Activated CD4-positive, alpha-beta memory T cell treated with anti-CD3 and anti-CD28 coated beads for 36 hours (primary cell): ENCODE measurements at regions of chr9 and their contacts with region 1.

Region 1: GRCh38 chr9:89602978-89603766 is 1.6 kb upstream of the GADD45G start:
- DNase-seq: peak; percentile 94
- H3K4me3 Mint-ChIP-seq: peak overlapping the region; percentile 71
- H3K27ac Mint-ChIP-seq: peak overlapping the region; percentile 58
- H3K4me1 Mint-ChIP-seq: peaks cover 28% of the 10 kb centered on the region
- H3K27me3 Mint-ChIP-seq: no peaks in the 10 kb centered on the region

Region 2: DNA sequence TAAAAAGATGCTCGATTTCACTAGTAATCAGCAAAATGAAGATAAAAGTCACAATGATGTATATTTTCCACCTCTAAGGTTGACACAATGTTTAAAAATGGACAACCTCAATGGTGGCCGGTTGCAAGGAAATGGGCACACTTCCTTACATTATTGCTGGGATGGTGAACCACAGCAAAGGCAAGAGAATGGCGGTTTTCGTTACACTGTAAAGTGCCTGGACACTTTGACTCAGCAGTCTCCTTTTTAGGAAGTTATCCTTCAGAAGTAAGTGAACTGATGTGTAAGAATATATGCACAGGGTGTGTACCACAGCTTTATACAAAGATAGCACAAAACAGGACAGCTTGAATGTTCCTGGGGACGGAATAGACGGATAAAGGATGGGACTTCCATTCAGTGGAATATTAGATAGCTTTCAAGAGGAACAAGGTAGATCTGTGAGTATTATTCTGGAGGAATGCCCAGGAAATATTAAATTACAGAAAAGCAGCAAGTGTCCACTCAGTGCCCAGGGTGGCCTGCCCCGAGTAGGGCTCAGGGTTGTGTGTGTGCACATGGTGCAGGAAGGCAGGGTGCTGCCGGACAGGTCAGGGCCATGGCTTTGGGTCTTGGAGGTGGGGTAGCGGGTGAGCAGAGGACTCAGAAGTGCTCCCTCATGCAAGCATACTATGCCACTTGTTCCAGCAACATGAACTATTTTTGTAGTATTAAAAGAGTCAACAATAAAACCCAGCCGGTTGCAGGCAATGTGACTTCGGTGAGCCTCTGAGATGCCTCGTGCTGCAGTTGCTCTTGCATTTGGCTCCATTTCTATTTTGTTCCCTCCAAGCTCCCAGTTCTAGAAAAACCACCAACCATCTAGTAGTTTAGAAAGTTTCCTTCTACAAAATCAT is 26.2 kb after region 1 on chr9:
- CTCF ChIA-PET with region 1: interaction called, 11 read pairs
- POLR2A ChIA-PET with region 1: no interaction called
- intact Hi-C with region 1: loop called (anchors 2 kb)
- DNase-seq: peak; percentile 37
- H3K4me3 Mint-ChIP-seq: no peak overlapping the region
- H3K27ac Mint-ChIP-seq: no peak overlapping the region
- H3K4me1 Mint-ChIP-seq: peaks cover 6% of the 10 kb centered on the region
- H3K27me3 Mint-ChIP-seq: peaks cover 1% of the 10 kb centered on the region

Region 3: GRCh38 chr9:89716559-89716958 is 113.4 kb after region 1 on chr9:
- CTCF ChIA-PET with region 1: no interaction called
- POLR2A ChIA-PET with region 1: no interaction called
- intact Hi-C with region 1: loop called (anchors 5 kb)
- DNase-seq: no peak
- H3K4me3 Mint-ChIP-seq: no peak overlapping the region
- H3K27ac Mint-ChIP-seq: no peak overlapping the region
- H3K4me1 Mint-ChIP-seq: peaks cover 29% of the 10 kb centered on the region
- H3K27me3 Mint-ChIP-seq: no peaks in the 10 kb centered on the region

Region 4: GRCh38 chr9:89808076-89808755 is 205.0 kb after region 1 on chr9:
- CTCF ChIA-PET with region 1: interaction called, 3 read pairs
- POLR2A ChIA-PET with region 1: no interaction called
- intact Hi-C with region 1: loop called (anchors 10 kb)
- DNase-seq: no peak
- H3K4me3 Mint-ChIP-seq: no peak overlapping the region
- H3K27ac Mint-ChIP-seq: no peak overlapping the region
- H3K4me1 Mint-ChIP-seq: peaks cover 14% of the 10 kb centered on the region
- H3K27me3 Mint-ChIP-seq: no peaks in the 10 kb centered on the region

Region 5: DNA sequence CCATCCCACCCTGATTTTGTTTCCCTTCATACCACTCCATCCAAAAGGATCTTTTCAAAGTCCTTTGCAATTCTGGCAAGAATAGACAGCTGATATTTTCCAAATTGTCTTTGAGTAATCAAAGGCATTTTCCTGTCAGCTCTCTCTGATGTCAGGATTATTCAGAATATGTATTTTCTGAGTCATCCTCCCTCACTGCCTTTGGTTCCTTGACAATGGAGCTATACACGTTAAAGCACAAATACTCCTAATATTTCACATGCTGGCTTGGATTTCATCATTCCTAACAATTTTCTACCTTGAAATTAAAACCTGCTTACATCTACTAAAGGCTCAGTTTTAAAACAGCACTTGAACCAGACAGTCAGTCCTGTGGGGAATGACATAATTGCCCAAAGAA is 381.0 kb after region 1 on chr9:
- CTCF ChIA-PET with region 1: interaction called, 11 read pairs
- POLR2A ChIA-PET with region 1: interaction called, 5 read pairs
- intact Hi-C with region 1: loop called (anchors 1 kb)
- DNase-seq: no peak
- H3K4me3 Mint-ChIP-seq: peak overlapping the region; percentile 11
- H3K27ac Mint-ChIP-seq: peak overlapping the region; percentile 79
- H3K4me1 Mint-ChIP-seq: peaks cover 49% of the 10 kb centered on the region
- H3K27me3 Mint-ChIP-seq: peaks cover 33% of the 10 kb centered on the region

Region 6: DNA sequence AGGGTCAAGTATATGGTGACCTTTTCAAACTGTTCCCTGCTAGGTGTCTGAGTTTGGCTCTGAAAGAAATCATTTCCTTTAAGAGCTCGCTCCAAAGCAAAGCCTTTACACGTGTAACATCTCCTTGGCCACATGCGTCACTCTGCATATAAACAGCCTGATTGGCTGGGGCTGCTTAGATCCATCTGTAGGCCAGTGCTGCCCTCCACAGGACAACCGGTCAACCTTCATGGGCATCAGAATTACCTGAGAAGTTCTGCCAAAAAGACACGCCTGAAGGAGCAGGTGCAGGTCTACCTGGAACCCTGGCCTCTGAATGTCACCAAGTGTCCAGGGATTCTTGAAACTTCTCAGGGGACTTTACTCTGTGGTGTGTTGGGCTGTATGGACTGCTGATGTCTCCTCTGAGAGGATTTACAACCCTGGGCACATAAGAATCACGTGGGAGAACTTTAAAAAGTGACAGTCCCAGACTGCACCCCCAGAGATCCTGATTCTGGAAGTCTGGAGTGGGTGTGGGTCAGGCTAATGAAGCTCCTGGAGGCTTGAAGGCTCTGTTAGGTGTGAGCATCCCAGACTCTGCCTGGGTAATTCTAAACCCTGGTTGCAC is 499.2 kb after region 1 on chr9:
- CTCF ChIA-PET with region 1: interaction called, 258 read pairs
- POLR2A ChIA-PET with region 1: interaction called, 6 read pairs
- intact Hi-C with region 1: loop called (anchors 1 kb)
- DNase-seq: peak; percentile 87
- H3K4me3 Mint-ChIP-seq: no peak overlapping the region
- H3K27ac Mint-ChIP-seq: no peak overlapping the region
- H3K4me1 Mint-ChIP-seq: peaks cover 2% of the 10 kb centered on the region
- H3K27me3 Mint-ChIP-seq: peaks cover 7% of the 10 kb centered on the region